Mammary epithelial cell (primary cell): ENCODE measurements at regions of chr5 and their contacts with region 1.

Region 1: DNA sequence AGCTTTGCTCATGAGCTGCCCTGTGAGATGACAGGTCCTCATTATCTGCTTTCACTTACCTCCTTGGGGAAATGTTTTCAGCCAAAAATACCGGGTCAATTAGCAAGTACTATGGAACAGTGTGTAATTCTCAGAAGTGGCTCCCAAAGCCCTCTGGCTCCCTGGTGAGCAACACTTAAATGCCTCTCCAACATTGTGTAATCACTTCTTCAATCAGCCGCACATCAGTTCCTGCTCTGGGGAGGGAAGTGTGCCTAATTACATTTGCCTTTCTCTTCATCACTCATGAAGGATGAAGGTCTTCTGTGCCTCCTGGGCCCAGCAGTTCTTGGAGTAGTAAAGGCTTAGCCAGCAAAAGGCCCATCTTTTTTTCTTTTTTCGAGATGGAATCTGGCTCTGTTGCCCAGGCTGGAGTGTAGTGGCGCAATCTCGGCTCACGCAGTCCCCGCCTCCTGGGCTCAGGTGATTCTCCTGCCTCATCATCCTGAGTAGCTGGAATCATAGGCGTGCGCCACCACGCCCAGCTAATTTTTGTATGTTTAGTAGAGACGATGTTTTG is 23.1 kb downstream of the NIM1K start:
- DNase-seq: peak; percentile 37
- H3K4me3 ChIP-seq: no peak overlapping the region
- H3K27ac ChIP-seq: no peak overlapping the region
- H3K4me1 ChIP-seq: no peaks in the 10 kb centered on the region
- H3K27me3 ChIP-seq: no peaks in the 10 kb centered on the region
- CTCF ChIP-seq: no peak

Region 2: DNA sequence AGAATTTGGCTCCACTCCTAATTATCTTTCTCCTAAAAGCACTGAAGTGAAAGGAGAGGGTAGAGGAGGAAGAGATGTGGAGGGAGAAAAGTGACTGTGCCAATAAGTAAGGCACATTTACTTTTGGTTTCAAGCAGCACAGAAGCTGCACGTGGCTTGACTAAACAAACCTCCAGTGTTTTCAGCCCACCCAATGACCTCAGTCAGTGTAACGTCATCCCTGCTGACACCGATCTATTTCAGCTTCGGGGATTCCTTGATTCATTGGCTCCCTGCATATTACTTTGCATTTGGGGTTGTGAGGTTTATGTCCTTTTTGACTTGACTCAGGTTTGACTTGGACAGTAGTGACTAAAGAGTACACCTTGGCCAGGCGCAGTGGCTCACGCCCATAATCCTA is 58.8 kb before region 1 on chr5:
- CTCF ChIA-PET with region 1: no interaction called
- dilution Hi-C with region 1: no loop called
- in situ Hi-C with region 1: no loop called
- intact Hi-C with region 1: no loop called
- DNase-seq: no peak
- H3K4me3 ChIP-seq: no peak overlapping the region
- H3K27ac ChIP-seq: no peak overlapping the region
- H3K4me1 ChIP-seq: no peaks in the 10 kb centered on the region
- H3K27me3 ChIP-seq: no peaks in the 10 kb centered on the region
- CTCF ChIP-seq: no peak

Region 3: GRCh38 chr5:43168175-43168574 is 47.0 kb before region 1 on chr5:
- CTCF ChIA-PET with region 1: no interaction called
- dilution Hi-C with region 1: no loop called
- in situ Hi-C with region 1: no loop called
- intact Hi-C with region 1: no loop called
- DNase-seq: no peak
- H3K4me3 ChIP-seq: no peak overlapping the region
- H3K27ac ChIP-seq: no peak overlapping the region
- H3K4me1 ChIP-seq: no peaks in the 10 kb centered on the region
- H3K27me3 ChIP-seq: no peaks in the 10 kb centered on the region
- CTCF ChIP-seq: no peak

Region 4: DNA sequence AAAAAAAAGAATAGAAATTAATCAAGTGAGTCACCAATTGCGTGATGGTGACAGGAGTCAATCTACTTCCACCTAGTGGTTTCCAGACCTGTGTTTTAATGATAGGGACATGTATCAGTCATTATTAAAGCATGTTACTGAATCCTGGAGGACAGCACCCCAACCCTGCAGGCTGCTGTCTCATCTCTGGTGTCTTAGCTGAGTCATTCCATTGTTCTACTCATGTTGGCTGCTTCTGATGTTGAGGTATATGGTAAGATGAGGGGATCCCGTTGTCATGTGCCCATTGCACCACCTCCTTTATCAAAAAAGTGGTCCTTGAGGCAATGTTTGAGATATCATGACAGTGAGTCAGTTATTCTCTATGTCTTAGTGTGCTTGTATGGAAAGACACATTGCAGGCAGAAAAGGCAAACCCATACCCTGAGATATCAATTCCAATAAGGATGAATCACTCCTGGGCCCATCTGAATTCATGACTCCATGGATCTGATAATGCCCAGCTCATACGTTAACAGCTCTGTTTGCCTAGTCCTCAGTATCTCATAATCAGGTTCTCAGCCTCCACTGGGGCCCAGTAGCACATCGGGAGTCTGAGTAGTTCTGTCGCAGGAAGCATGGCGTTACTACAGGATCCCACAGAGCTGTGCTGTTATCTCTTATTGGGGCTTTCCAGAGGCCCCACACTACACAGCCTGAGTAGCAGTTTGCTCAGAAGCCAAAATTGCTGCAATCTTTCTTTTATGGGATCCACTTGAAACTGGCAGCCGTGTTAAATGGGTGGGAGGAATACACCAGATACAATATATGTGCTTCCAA is 66.9 kb after region 1 on chr5:
- CTCF ChIA-PET with region 1: no interaction called
- dilution Hi-C with region 1: loop called (anchors 5 kb)
- in situ Hi-C with region 1: no loop called
- intact Hi-C with region 1: no loop called
- DNase-seq: peak; percentile 70
- H3K4me3 ChIP-seq: no peak overlapping the region
- H3K27ac ChIP-seq: no peak overlapping the region
- H3K4me1 ChIP-seq: peaks cover 20% of the 10 kb centered on the region
- H3K27me3 ChIP-seq: no peaks in the 10 kb centered on the region
- CTCF ChIP-seq: peak in 1 of 2 donors; percentile 13